MCF 10A (cell line): ENCODE measurements at regions of chr19 and their contacts with region 1.

Region 1: GRCh38 chr19:49817964-49818648 is at the start of gene MED25:
- DNase-seq: peak; percentile 84
- H3K4me3 Mint-ChIP-seq: peak within 1 kb of the TSS; percentile 97
- H3K27ac Mint-ChIP-seq: peak within 1 kb of the TSS; percentile 100
- H3K4me1 Mint-ChIP-seq: peaks cover 16% of the 10 kb centered on the region
- H3K27me3 Mint-ChIP-seq: no peaks in the 10 kb centered on the region
- CTCF ChIP-seq: peak; percentile 26
- total RNA-seq, gene MED25: 39.9 and 43.2 TPM in 2 replicates

Region 2: GRCh38 chr19:49869441-49870176 is 51.5 kb after region 1 on chr19:
- CTCF ChIA-PET with region 1: no interaction called
- POLR2A ChIA-PET with region 1: interaction called, 21 read pairs
- intact Hi-C with region 1: loop called (anchors 5 kb)
- DNase-seq: peak; percentile 100
- H3K4me3 Mint-ChIP-seq: no peak overlapping the region
- H3K27ac Mint-ChIP-seq: no peak overlapping the region
- H3K4me1 Mint-ChIP-seq: peaks cover 5% of the 10 kb centered on the region
- H3K27me3 Mint-ChIP-seq: no peaks in the 10 kb centered on the region
- CTCF ChIP-seq: no peak

Region 3: DNA sequence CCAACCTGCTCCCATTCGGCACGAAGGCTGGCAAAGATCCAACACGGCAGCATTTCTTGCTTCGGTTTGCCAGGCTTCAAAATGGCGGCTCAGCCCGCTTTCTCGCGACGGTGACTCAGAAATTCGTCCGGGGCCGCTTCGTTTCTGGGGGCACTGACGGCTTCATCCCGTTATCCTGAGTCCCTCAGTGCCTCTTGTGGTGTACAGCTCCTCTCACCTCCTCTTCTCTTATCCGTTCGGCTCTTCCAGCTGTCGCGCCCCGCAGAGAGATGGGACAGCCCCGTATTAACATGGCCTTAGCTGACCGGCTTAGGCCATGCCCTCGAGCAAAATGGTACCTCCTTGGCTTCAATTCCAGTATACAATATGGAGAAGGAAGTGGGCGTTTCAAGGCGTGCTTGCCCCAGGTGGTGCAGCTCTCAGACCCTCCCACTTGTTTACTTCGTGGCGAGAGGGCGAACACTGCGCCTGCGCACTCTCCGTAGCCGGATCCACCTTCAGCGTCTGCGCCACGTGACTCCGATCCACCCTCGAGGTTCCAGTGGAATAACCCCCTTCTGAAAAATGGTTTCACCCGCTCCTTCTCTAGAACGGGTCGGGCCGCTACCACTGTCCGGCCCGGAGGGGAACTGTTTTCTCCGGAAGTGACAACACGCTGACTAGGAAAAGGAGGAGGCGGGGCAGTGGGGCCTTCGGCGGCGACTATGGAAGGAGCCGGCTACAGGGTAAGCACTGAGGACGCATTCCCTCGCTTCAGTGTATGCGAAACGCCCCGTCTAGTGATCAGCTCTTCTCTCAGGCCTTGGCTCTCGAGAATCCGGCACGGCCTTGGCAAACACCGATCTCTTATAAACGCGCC is 59.1 kb after region 1 on chr19 and contains the starts of genes AKT1S1 and TBC1D17:
- CTCF ChIA-PET with region 1: no interaction called
- POLR2A ChIA-PET with region 1: interaction called, 11 read pairs
- intact Hi-C with region 1: no loop called
- DNase-seq: peak; percentile 100
- H3K4me3 Mint-ChIP-seq: no peak within 1 kb of the TSS
- H3K27ac Mint-ChIP-seq: no peak within 1 kb of the TSS
- H3K4me1 Mint-ChIP-seq: peaks cover 10% of the 10 kb centered on the region
- H3K27me3 Mint-ChIP-seq: no peaks in the 10 kb centered on the region
- CTCF ChIP-seq: no peak
- total RNA-seq, gene AKT1S1: 74.7 and 79.2 TPM in 2 replicates
- total RNA-seq, gene TBC1D17: 25.2 and 25.5 TPM in 2 replicates

Region 4: DNA sequence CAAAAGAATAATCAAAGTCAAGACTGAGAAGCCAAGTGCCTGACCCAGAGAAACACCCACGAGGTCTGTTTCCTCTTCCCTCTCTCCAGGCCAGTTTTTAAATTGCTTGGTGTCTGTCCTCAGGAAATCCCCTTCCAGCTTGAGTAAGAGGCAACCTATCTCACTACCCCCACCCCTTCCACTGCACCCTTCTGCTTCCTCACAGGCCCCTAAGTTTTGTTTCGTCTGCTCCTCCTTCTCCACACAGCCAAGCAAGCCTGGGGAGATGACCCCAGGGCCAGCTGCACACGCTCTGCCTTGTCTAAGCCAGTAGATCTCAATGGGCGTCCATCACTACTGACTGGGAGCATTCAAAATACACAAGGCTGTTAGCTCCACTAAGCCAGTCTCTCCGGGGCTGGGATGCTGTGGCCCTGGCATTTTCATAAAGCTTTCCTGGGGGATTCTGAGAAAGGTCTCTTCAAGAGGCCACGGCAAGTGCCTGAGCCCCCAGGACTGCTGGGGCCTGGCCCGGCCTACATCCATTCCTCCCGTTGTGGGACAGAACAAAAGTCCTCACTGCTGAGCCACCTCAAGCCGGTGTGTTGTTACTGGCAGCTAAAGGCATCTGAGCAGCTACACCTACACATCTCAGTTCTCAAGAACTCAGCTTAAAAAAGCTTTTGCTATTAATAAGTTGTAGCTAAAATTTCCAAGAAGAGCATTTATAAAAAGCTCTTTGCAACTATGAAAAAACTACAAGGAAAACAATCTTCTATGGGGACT is 93.5 kb after region 1 on chr19:
- CTCF ChIA-PET with region 1: no interaction called
- POLR2A ChIA-PET with region 1: no interaction called
- intact Hi-C with region 1: no loop called
- DNase-seq: no peak
- H3K4me3 Mint-ChIP-seq: no peak overlapping the region
- H3K27ac Mint-ChIP-seq: peak overlapping the region; percentile 61
- H3K4me1 Mint-ChIP-seq: peaks cover 9% of the 10 kb centered on the region
- H3K27me3 Mint-ChIP-seq: no peaks in the 10 kb centered on the region
- CTCF ChIP-seq: no peak